ENCODE measurements at regions of chr12 and their contacts with region 1.

Region 1: GRCh38 chr12:89709157-89709994 is 738 bp upstream of the ATP2B1 start:
- DNase-seq: peak; percentile 97
- H3K4me3 Mint-ChIP-seq: peak overlapping the region; percentile 81
- H3K27ac Mint-ChIP-seq: peak overlapping the region; percentile 91
- H3K4me1 Mint-ChIP-seq: peaks cover 26% of the 10 kb centered on the region
- H3K27me3 Mint-ChIP-seq: peaks cover 31% of the 10 kb centered on the region

Region 2: GRCh38 chr12:88035271-88035906 is 1674.0 kb before region 1 on chr12:
- intact Hi-C with region 1: loop called (anchors 2 kb)
- DNase-seq: peak; percentile 84
- H3K4me3 Mint-ChIP-seq: peak overlapping the region; percentile 98
- H3K27ac Mint-ChIP-seq: peak overlapping the region; percentile 96
- H3K4me1 Mint-ChIP-seq: peaks cover 55% of the 10 kb centered on the region
- H3K27me3 Mint-ChIP-seq: no peaks in the 10 kb centered on the region

Region 3: DNA sequence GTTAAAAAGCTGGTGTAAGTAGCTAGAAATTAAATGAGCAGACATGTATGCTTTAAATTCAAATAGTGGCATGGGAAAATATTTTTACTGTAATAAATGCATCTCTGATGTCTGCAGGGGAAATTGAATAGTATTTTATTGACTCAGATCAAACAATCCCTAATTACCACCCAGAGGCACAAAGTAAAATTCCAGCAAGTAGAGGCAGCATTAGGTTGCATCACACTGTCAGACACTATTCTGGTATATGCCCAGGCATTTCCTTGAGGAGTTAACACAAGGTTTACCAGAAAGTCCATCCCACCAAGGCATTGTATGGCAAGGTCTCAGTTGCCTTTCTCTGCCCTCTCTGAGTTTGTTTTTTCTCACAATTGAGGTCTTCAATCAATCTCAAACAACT is 927.5 kb before region 1 on chr12:
- intact Hi-C with region 1: no loop called
- DNase-seq: no peak
- H3K4me3 Mint-ChIP-seq: no peak overlapping the region
- H3K27ac Mint-ChIP-seq: no peak overlapping the region
- H3K4me1 Mint-ChIP-seq: no peaks in the 10 kb centered on the region
- H3K27me3 Mint-ChIP-seq: no peaks in the 10 kb centered on the region

Region 4: DNA sequence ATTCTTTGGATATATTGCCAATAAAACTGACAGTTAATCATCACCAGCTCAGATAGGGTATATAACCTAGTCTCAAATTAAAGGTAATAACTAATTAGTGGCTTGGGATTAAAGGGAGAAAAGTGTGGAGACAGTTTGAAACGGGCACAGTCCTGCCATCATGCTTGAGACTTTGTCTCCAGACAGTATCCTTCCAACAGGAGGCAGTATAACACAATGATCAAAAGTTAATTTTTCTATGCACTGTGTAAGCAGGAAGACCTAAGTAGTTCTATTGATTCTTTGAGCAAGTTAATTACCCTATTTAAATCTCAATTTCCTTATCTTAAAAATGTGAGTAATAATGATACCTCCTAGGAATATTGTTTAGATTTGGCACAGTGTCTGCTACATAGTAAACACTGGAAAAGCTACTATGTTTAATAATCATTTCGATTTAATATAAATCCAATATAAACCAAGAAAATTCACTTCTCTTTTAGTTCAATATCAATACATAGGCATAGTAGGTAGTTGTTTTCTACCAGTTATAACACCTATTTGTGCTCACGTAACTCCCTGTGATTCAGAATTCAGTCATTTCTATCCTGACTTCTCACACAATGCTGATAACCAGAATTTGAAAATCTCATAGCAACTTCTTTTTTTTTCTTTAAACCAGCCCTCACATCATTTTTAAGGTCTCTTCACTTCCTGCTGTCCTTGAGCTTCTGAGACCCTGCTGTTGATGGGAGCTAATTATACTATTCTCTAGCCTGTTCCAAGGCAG is 238.5 kb before region 1 on chr12:
- intact Hi-C with region 1: loop called (anchors 2 kb)
- DNase-seq: no peak
- H3K4me3 Mint-ChIP-seq: no peak overlapping the region
- H3K27ac Mint-ChIP-seq: peak overlapping the region; percentile 22
- H3K4me1 Mint-ChIP-seq: peaks cover 76% of the 10 kb centered on the region
- H3K27me3 Mint-ChIP-seq: no peaks in the 10 kb centered on the region

Region 5: GRCh38 chr12:89597770-89598169 is 111.6 kb before region 1 on chr12:
- intact Hi-C with region 1: loop called (anchors 2 kb)
- DNase-seq: no peak
- H3K4me3 Mint-ChIP-seq: no peak overlapping the region
- H3K27ac Mint-ChIP-seq: peak overlapping the region; percentile 88
- H3K4me1 Mint-ChIP-seq: peaks cover 19% of the 10 kb centered on the region
- H3K27me3 Mint-ChIP-seq: peaks cover 6% of the 10 kb centered on the region

Region 6: DNA sequence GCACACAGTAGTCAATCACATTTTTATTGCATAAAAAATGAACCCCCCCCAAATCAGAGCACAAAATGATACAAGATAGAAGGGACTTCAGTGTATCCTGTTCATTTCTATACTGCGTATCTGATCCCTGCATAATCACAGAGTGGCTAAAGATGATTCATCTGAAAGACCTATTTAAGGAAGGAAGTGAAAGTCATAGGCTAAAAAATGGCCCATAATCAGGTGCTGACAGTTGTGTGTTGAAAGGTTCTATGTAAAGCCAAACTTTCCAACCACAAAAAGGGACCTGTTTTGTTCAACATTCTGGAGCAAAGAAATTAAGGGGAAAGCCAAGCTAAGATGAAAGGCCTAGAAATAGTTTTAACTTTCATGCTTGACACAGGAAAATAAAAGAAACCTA is 147.1 kb after region 1 on chr12:
- intact Hi-C with region 1: loop called (anchors 1 kb)
- DNase-seq: no peak
- H3K4me3 Mint-ChIP-seq: peak overlapping the region; percentile 25
- H3K27ac Mint-ChIP-seq: peak overlapping the region; percentile 62
- H3K4me1 Mint-ChIP-seq: peaks cover 40% of the 10 kb centered on the region
- H3K27me3 Mint-ChIP-seq: no peaks in the 10 kb centered on the region

Region 7: DNA sequence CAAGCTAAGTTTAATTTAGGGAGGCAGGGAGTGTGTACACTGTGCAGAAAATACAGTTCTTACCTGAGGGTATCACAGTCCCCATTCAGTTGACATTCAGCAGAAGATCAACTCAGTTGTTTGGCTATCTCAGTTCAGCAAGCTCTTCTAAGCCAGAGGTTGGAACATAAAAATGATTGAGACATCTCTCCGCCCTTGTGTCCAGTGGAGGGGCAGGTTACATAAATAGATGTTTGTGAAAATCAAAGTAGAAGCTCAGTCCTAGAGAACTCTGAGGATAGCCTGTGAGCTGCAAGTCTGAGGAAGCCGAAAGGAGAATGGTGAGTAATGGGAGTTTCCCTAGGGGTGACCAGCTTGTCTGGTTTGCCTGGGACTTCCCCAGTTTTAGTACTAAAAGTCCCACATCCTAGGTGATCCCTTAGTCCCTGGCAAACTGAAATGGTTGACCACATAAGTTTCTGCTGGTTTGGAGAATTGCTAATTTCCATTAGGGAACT is 250.7 kb after region 1 on chr12:
- intact Hi-C with region 1: loop called (anchors 2 kb)
- DNase-seq: peak; percentile 18
- H3K4me3 Mint-ChIP-seq: no peak overlapping the region
- H3K27ac Mint-ChIP-seq: no peak overlapping the region
- H3K4me1 Mint-ChIP-seq: peaks cover 20% of the 10 kb centered on the region
- H3K27me3 Mint-ChIP-seq: peaks cover 17% of the 10 kb centered on the region

Region 8: DNA sequence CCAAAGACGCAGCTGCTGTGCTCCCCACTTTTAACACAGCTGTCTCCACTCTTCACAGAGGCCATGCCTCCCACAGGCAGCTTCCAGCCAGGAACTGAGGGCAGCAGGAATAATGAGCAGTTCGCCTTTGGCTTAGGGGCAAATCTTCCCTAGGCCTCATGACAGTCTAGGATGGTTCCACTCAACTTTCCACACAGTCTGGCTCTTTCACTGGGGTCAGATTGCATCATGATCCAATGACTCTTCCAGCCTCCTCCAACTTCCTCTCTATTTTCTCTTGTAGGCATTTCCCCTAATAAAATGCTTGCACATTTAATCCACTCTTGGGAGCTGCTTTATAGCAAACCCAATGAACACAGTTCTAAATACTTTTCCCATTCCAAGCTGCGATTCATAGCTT is 270.9 kb after region 1 on chr12:
- intact Hi-C with region 1: no loop called
- DNase-seq: no peak
- H3K4me3 Mint-ChIP-seq: no peak overlapping the region
- H3K27ac Mint-ChIP-seq: no peak overlapping the region
- H3K4me1 Mint-ChIP-seq: no peaks in the 10 kb centered on the region
- H3K27me3 Mint-ChIP-seq: no peaks in the 10 kb centered on the region

Region 9: GRCh38 chr12:89999699-90000505 is 290.5 kb after region 1 on chr12:
- intact Hi-C with region 1: no loop called
- DNase-seq: no peak
- H3K4me3 Mint-ChIP-seq: no peak overlapping the region
- H3K27ac Mint-ChIP-seq: no peak overlapping the region
- H3K4me1 Mint-ChIP-seq: no peaks in the 10 kb centered on the region
- H3K27me3 Mint-ChIP-seq: no peaks in the 10 kb centered on the region